Natural killer cell (primary cell): ENCODE measurements at regions of chr11 and their contacts with region 1.

Region 1: DNA sequence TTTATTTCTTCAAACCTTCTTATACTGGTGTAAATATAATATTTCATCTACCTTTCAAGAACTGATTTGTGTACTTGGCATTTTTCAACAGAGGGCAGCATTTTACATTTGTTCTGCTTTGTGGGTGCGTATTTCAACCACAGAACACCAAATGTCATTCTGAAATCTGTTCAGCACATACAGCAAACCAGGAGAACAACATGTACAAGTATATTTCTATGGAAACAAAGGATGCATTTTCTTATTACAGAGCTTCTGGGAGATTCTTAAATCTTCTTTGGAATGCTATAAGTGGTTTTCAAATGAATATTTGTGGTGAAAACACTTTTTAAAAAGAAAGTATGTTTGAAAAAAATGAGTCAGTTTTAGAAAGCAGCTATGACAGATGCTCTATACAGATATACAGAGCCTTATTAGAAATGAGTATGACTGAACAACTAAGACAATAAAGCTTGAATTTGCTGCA is 946.0 kb downstream of the FAM181B start:
- DNase-seq: peak in 1 of 2 donors; percentile 68
- ATAC-seq: peak; percentile 47 to 53 (median 52)
- H3K4me3 ChIP-seq: no peak overlapping the region
- H3K4me3 Mint-ChIP-seq: no peak overlapping the region
- H3K27ac ChIP-seq: no peak overlapping the region
- H3K27ac Mint-ChIP-seq: no peak overlapping the region
- H3K4me1 ChIP-seq: no peaks in the 10 kb centered on the region
- H3K4me1 Mint-ChIP-seq: peaks cover 7% of the 10 kb centered on the region in 2 donors
- H3K27me3 ChIP-seq: no peaks in the 10 kb centered on the region
- H3K27me3 Mint-ChIP-seq: no peaks in the 10 kb centered on the region
- CTCF ChIP-seq: peak; percentile 37

Region 2: DNA sequence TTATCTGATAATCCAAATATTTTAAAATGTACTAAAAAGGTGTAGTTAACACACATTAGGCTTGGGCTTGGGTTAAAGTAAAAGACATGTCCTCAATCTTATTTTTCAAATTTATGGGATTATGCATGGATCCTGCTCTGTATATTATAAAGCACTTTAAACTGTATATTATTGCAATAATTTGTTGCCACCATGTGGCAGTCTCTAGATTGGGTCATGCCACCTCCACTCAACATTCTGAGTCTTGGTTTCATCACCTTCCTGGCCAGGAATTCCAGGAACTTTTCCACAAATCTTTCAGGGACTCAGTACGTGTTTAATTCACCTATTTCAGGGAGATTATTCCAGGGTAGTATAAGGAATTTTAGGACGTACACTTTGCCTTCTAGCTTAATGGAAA is 250.5 kb after region 1 on chr11:
- intact Hi-C with region 1: loop called (anchors 10 kb)
- DNase-seq: peak in 1 of 2 donors; percentile 4
- ATAC-seq: no peak
- H3K4me3 ChIP-seq: no peak overlapping the region
- H3K4me3 Mint-ChIP-seq: no peak overlapping the region
- H3K27ac ChIP-seq: no peak overlapping the region
- H3K27ac Mint-ChIP-seq: no peak overlapping the region
- H3K4me1 ChIP-seq: no peaks in the 10 kb centered on the region
- H3K4me1 Mint-ChIP-seq: no peaks in the 10 kb centered on the region
- H3K27me3 ChIP-seq: no peaks in the 10 kb centered on the region
- H3K27me3 Mint-ChIP-seq: no peaks in the 10 kb centered on the region
- CTCF ChIP-seq: no peak